MCF 10A (cell line): ENCODE measurements at regions of chr17 and their contacts with region 1.

Region 1: GRCh38 chr17:75277664-75278071 is 6.6 kb upstream of the MIF4GD start:
- DNase-seq: no peak
- H3K4me3 Mint-ChIP-seq: peak overlapping the region; percentile 27
- H3K27ac Mint-ChIP-seq: peak overlapping the region; percentile 88
- H3K4me1 Mint-ChIP-seq: peaks cover 19% of the 10 kb centered on the region
- H3K27me3 Mint-ChIP-seq: no peaks in the 10 kb centered on the region
- CTCF ChIP-seq: no peak

Region 2: DNA sequence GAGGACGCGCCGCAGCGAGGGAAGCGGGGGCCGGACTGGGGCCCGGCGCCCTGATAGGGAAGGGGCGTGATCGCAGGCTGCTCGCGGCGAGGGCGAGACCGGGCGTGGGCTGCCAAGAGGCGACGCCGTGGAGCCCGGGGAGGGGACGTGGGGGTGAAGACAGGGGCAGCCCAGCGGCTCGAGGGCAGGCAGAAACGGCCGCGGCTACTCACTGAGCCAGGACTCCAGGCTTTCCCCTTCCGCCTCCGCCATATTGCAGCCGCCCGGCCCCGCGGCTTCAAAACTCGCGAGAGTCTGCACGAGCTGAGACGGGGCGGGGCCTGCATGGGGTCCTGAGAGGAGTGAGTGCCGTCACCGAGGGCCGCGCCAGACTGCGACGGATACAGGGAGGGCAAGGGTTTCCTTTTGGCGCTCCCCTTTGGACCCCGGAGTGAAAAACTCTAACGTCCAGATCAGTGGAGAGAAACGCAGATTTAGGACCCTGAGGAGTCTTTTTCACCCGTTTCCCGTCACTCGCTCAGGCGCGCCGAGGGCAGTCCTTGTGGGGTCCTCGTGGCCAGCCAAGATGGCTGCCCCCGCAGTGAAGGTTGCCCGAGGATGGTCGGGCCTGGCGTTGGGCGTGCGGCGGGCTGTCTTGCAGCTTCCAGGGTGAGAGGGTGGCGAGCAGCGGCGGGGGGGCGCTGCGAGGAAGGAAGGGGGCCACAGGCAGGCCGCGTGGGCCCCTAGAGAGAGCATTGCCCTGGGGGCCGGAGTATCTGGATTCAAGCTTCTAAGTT is 16.1 kb before region 1 on chr17 and contains the starts of genes GGA3 and MRPS7:
- CTCF ChIA-PET with region 1: interaction called, 3 read pairs
- POLR2A ChIA-PET with region 1: interaction called, 142 read pairs
- intact Hi-C with region 1: no loop called
- DNase-seq: peak; percentile 94
- H3K4me3 Mint-ChIP-seq: peak within 1 kb of the TSS; percentile 100
- H3K27ac Mint-ChIP-seq: peak within 1 kb of the TSS; percentile 100
- H3K4me1 Mint-ChIP-seq: peaks cover 46% of the 10 kb centered on the region
- H3K27me3 Mint-ChIP-seq: no peaks in the 10 kb centered on the region
- CTCF ChIP-seq: no peak
- total RNA-seq, gene GGA3: 32.7 and 39.5 TPM in 2 replicates
- total RNA-seq, gene MRPS7: 73.9 and 75.0 TPM in 2 replicates